Right cardiac atrium (tissue), 5 donors: ENCODE measurements at regions of chr5 and their contacts with region 1.

Region 1: DNA sequence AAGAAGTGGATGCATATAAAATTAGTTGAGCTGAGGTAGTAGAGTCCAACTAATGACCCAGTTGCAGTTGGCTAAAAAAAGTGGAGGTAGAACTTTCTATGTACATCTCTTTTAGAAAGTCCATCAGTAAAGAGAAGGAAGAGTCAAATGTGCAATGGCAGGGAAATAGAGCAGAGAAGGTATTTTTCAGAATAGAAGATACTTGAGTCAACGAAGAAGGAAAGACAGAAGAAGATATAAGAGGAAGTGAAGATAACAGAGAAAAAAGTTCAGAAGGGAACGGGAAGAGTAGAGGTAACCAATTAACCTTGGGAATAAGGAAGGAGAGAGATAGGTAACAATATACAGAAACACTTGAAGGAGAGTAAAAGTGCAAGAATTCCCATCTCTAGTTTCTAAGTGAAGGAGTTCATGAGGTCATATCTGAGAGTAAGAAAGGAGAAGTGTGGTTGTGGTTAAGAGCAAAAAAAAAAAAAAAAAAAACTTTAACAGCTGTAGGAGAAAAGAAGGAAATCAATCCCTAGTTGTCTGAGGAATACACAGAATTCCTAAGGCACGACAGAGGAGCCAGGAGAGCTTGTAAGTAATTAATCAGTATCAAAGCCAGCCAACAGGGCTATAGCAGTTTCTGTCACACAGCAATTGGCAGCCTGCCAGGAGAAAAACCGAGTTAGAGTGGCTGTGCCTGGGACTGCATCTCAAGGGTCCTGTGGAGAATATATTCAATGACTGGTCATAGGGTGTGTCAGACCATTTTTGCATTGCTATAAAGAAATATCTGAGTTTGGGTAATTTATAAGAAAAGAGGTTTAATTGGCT is 61.0 kb downstream of the ARL15 start:
- DNase-seq: peak in 2 of 3 donors; percentile 30 to 70
- ATAC-seq: no peak
- H3K4me3 ChIP-seq: no peak overlapping the region
- H3K27ac ChIP-seq: no peak overlapping the region
- H3K4me1 ChIP-seq: peaks cover 5% of the 10 kb centered on the region
- H3K27me3 ChIP-seq: no peaks in the 10 kb centered on the region

Region 2: DNA sequence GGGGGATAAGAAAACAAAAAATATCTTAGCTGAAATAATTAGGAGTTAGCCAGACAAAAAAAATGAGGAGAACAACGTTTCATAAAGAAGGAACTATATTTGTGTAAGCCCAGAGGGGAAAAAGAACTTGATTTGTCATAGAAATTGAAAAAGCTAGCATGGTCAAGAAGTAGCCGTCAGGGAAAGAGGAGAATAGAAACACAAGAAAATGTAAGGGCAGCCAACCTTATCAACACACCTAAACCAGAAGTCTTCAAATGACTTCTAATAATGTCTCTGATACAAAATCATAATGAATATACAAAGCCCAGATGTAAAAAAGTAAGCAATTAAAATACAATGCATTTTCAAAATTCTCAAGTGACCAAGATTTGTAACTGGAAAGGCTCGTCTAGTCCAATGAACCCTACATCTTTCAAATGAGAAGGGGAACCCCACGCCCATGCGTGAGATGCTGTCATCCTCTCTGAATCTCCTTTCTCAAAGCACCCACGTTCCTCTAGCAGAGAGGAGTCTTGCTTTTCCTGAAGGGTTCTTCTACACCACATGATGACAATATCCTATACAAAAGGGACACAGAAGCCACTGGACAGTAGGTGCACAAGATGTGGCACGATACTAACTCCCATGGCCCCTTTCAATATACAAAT is 42.7 kb before region 1 on chr5:
- intact Hi-C with region 1: no loop called
- DNase-seq: no peak
- ATAC-seq: no peak
- H3K4me3 ChIP-seq: no peak overlapping the region
- H3K27ac ChIP-seq: no peak overlapping the region
- H3K4me1 ChIP-seq: no peaks in the 10 kb centered on the region
- H3K27me3 ChIP-seq: no peaks in the 10 kb centered on the region

Region 3: DNA sequence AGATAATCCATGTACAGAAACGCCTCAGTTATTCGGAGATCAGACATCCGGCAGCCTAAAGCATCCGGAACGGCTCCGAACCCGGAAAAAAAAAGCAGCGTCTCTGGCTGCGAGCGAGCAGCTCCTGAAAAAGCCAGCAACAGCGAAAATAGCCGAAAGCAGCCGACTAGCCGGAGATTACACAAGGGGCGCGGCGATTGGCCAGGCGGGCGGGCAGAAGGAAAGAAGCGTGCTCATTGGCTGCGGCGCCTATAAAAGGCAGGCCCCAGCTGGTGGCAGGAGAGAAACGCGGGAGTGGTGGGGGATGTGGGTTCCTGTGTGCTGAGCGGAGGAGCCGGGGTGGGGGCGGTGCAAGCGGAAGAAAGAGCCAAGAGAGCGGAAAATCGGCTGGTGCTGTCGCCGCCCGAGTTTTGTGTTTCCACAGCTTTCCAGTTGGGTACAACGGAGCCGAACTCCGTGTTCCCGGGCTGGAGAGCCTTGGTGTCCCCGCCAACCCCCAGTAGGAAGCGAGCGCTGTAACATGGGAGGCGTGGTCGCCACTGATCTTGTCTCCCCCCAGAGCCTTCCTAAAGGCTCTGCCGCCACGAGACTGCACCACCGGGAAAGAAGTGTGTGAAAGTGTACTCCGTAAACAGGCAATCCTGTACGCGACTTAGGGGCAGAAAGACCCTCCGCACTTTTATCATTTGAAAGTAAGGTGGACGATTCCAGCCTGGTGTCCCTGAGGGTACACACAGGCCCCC is 61.2 kb after region 1 on chr5 and contains the start of gene ARL15:
- intact Hi-C with region 1: loop called in 2 of 4 experiments (anchors 5 to 10 kb)
- DNase-seq: peak; percentile 99 to 100 (median 99)
- ATAC-seq: peak; percentile 99
- H3K4me3 ChIP-seq: peak within 1 kb of the TSS; percentile 81
- H3K27ac ChIP-seq: peak within 1 kb of the TSS; percentile 93
- H3K4me1 ChIP-seq: no peaks in the 10 kb centered on the region
- H3K27me3 ChIP-seq: no peaks in the 10 kb centered on the region
- total RNA-seq, gene ARL15: 24.0 to 30.3 (median 25.1) TPM

Region 4: GRCh38 chr5:54415896-54416601 is 166.6 kb after region 1 on chr5:
- intact Hi-C with region 1: loop called in 3 of 4 experiments (anchors 5 to 10 kb)
- DNase-seq: no peak
- ATAC-seq: no peak
- H3K4me3 ChIP-seq: no peak overlapping the region
- H3K27ac ChIP-seq: no peak overlapping the region
- H3K4me1 ChIP-seq: no peaks in the 10 kb centered on the region
- H3K27me3 ChIP-seq: no peaks in the 10 kb centered on the region

Region 5: DNA sequence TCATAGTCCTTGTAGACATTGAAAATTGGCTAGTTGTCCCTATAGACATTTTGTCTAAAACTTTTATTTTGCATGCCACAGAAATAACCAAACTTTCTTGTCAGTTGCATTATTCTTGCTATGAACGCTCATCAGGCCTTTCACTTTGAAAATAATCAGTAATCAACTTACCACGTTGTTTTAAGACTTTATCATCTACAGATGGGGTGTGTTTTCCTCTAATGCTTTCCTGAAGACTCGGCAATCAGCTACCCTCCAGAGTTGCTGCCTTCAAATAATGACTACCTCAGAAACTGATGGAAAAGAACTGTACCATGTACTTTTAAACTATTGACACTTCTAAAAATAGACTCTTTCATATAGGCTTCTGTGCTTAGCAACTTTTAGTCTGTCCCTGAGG is 172.6 kb after region 1 on chr5:
- intact Hi-C with region 1: loop called in 3 of 4 experiments (anchors 5 to 10 kb)
- DNase-seq: no peak
- ATAC-seq: no peak
- H3K4me3 ChIP-seq: no peak overlapping the region
- H3K27ac ChIP-seq: no peak overlapping the region
- H3K4me1 ChIP-seq: no peaks in the 10 kb centered on the region
- H3K27me3 ChIP-seq: no peaks in the 10 kb centered on the region

Region 6: DNA sequence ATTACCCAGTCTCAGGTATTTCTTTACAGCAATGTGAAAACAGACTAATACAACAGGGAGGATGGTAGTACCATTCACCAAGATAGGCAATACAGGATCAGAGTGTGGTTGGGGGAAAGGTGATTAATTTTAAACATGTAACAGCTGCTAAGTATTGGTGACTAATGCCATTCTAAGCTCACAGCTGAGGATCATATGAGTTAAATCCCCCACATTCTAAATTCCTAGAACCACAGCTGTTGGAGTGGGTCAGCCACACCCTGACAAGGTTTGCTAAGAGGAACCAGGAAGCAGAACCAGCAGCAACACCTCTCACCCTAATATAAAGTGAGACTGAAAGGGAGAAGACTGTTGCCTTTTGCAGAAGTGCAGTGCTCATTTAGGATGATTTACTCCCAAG is 230.9 kb after region 1 on chr5:
- intact Hi-C with region 1: loop called in 1 of 4 experiments (anchors 5 kb)
- DNase-seq: no peak
- ATAC-seq: no peak
- H3K4me3 ChIP-seq: no peak overlapping the region
- H3K27ac ChIP-seq: no peak overlapping the region
- H3K4me1 ChIP-seq: no peaks in the 10 kb centered on the region
- H3K27me3 ChIP-seq: no peaks in the 10 kb centered on the region

Region 7: DNA sequence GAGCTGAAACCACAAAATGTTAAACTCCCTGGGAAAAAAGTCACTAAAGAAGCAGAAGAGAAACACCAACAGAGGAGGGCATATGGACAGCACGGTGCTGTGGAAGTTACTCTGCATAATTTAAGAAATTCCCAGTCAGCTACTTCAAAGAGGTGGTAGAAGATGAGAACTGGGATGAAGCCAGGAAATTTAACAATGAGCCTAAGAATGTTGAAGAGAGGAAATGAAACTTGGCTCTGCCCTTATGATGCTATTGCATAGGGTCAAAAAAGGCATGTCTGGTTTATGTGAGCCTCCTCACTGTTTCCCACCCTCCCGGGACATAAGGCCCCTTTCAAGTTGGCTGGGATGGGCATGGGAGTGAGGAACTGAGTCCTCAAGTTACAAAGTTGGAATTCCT is 242.8 kb after region 1 on chr5:
- intact Hi-C with region 1: loop called in 3 of 4 experiments (anchors 5 to 10 kb)
- DNase-seq: no peak
- ATAC-seq: peak; percentile 24 to 34
- H3K4me3 ChIP-seq: no peak overlapping the region
- H3K27ac ChIP-seq: no peak overlapping the region
- H3K4me1 ChIP-seq: no peaks in the 10 kb centered on the region
- H3K27me3 ChIP-seq: no peaks in the 10 kb centered on the region

Region 8: GRCh38 chr5:54520438-54520846 is 271.0 kb after region 1 on chr5:
- intact Hi-C with region 1: no loop called
- DNase-seq: peak in 2 of 3 donors; percentile 28 to 55
- ATAC-seq: peak in 1 of 2 donors; percentile 7
- H3K4me3 ChIP-seq: peak overlapping the region; percentile 81
- H3K27ac ChIP-seq: peak overlapping the region; percentile 64
- H3K4me1 ChIP-seq: peaks cover 11% of the 10 kb centered on the region
- H3K27me3 ChIP-seq: no peaks in the 10 kb centered on the region